Activated B cell treated with CpG ODN at 0.5 μM for 24 hours (primary cell): ENCODE measurements at regions of chr6 and their contacts with region 1.

Region 1: DNA sequence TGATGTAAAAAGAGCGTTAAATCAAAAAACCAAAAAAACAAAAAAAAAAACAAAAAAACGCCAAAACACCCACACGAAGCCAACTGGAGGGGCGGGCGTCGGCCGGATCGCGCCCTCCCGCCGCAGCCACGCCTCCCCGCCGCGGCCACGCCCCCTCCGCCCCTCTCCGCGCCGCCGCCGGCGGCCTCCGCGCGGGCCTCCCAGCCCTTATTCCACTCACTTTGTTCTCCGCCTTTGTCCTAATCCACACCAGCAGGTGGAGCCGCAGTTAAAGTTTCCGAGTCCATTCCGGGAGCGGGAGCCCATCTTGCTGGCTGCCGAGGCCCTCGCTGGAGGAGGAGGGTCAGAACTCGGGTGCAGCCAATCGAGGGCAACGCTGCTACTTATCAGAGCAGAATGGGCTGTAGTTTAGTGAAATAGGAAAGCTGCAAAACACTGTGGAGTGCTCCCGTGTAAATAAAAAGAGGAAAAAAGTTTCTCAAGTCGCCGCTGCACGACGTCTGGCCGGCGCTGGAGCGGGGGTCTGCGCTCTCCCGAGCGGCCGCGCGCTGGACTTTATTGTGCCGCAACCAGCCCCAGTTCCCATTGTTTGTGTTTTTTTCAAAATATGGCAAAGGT is at the start of gene ASF1A:
- DNase-seq: peak; percentile 86
- ATAC-seq: peak; percentile 59
- H3K4me3 Mint-ChIP-seq: peak within 1 kb of the TSS; percentile 99
- H3K27ac Mint-ChIP-seq: peak within 1 kb of the TSS; percentile 90
- H3K4me1 Mint-ChIP-seq: peaks cover 65% of the 10 kb centered on the region
- H3K27me3 Mint-ChIP-seq: no peaks in the 10 kb centered on the region
- CTCF ChIP-seq: no peak
- total RNA-seq, gene ASF1A: 12.1 and 13.1 TPM in 2 replicates

Region 2: GRCh38 chr6:117674991-117675657 is 1218.8 kb before region 1 on chr6 and contains the start of gene NUS1:
- CTCF ChIA-PET with region 1: no interaction called
- POLR2A ChIA-PET with region 1: no interaction called
- intact Hi-C with region 1: loop called (anchors 10 kb)
- DNase-seq: peak; percentile 97
- ATAC-seq: peak; percentile 98
- H3K4me3 Mint-ChIP-seq: peak within 1 kb of the TSS; percentile 95
- H3K27ac Mint-ChIP-seq: peak within 1 kb of the TSS; percentile 89
- H3K4me1 Mint-ChIP-seq: peaks cover 42% of the 10 kb centered on the region
- H3K27me3 Mint-ChIP-seq: no peaks in the 10 kb centered on the region
- CTCF ChIP-seq: no peak
- total RNA-seq, gene NUS1: 29.1 and 30.6 TPM in 2 replicates

Region 3: DNA sequence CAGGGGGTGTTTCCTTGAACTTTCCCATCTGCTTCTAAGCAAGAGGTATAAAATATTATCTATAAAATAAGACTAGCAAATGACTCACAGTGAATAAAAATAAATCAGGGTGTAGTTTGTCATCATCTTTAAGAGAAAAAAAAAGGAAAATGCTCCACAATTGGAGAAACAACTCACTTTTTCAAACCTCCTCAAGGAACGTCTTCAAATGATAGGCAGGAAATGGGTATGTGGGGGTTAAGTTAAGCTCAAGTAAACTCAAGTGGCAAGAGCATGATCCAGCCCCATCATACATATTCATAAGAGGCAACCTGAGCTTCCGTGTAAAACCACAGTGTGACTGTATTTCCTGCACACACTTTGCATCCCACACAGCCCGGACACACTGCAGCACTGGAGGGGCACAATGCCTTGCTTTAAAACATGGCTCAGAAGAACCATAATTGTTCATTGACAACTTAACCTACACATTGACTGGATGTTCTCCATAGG is 184.0 kb before region 1 on chr6:
- CTCF ChIA-PET with region 1: no interaction called
- POLR2A ChIA-PET with region 1: interaction called, 13 read pairs
- intact Hi-C with region 1: loop called (anchors 2 kb)
- DNase-seq: no peak
- ATAC-seq: peak; percentile 92
- H3K4me3 Mint-ChIP-seq: peak overlapping the region; percentile 95
- H3K27ac Mint-ChIP-seq: peak overlapping the region; percentile 98
- H3K4me1 Mint-ChIP-seq: peaks cover 62% of the 10 kb centered on the region
- H3K27me3 Mint-ChIP-seq: no peaks in the 10 kb centered on the region
- CTCF ChIP-seq: no peak

Region 4: GRCh38 chr6:118810420-118811027 is 83.4 kb before region 1 on chr6:
- CTCF ChIA-PET with region 1: interaction called, 4 read pairs
- POLR2A ChIA-PET with region 1: interaction called, 6 read pairs
- intact Hi-C with region 1: loop called (anchors 1 kb)
- DNase-seq: no peak
- ATAC-seq: peak; percentile 82
- H3K4me3 Mint-ChIP-seq: peak overlapping the region; percentile 69
- H3K27ac Mint-ChIP-seq: peak overlapping the region; percentile 83
- H3K4me1 Mint-ChIP-seq: peaks cover 36% of the 10 kb centered on the region
- H3K27me3 Mint-ChIP-seq: no peaks in the 10 kb centered on the region
- CTCF ChIP-seq: no peak

Region 5: GRCh38 chr6:118881440-118882313 is 12.2 kb before region 1 on chr6:
- CTCF ChIA-PET with region 1: interaction called, 4 read pairs
- POLR2A ChIA-PET with region 1: interaction called, 36 read pairs
- intact Hi-C with region 1: loop called (anchors 1 kb)
- DNase-seq: no peak
- ATAC-seq: peak; percentile 58
- H3K4me3 Mint-ChIP-seq: peak overlapping the region; percentile 63
- H3K27ac Mint-ChIP-seq: peak overlapping the region; percentile 72
- H3K4me1 Mint-ChIP-seq: peaks cover 66% of the 10 kb centered on the region
- H3K27me3 Mint-ChIP-seq: no peaks in the 10 kb centered on the region
- CTCF ChIP-seq: no peak

Region 6: DNA sequence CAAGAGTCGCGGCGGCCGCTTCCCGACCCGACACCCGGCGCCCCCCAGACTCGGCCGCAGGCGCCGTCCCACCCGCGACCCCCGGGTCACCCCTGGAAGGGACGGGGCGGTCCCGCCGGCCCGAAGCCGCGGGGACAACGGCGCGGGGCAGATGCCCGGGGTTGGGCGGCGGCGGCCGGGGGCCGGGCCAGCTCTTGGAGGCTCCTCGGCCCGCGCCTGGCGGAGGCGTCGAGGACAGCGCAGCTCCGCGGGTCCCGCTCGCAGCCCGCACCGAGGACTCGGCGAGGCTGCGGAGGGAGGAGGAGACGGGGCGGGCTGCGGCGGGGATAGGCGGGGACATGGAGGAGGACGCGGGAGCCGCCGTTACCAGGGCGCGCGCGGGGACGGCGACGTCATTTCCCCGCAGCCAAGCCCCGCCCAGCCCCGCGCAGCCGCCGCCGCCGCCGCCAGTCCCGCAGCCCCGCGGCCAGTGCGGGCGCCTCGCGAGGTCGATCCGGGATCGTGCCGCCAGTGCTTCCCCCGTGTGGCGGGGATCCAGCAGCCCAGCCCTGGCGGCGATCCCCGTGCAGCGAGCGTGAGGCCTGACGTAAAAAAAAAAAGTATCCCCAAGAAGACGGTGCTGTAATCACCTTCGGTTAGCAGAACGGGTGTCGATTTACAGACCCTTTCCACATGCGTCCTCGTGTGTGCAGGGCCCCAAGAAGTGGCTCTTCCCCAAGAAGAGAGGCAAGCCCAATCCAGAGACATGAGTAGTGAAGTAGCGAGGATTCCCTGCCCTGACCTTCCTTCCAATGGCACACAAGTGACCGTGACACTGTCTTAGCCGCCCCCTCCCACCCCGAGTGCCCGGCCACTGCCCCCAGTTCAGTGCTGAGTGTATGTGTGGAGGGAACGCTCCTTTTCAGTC is 184.7 kb after region 1 on chr6 and contains the start of gene FAM184A:
- CTCF ChIA-PET with region 1: no interaction called
- POLR2A ChIA-PET with region 1: no interaction called
- intact Hi-C with region 1: loop called (anchors 2 kb)
- DNase-seq: peak; percentile 61
- ATAC-seq: peak; percentile 83
- H3K4me3 Mint-ChIP-seq: peak within 1 kb of the TSS; percentile 93
- H3K27ac Mint-ChIP-seq: no peak within 1 kb of the TSS
- H3K4me1 Mint-ChIP-seq: peaks cover 17% of the 10 kb centered on the region
- H3K27me3 Mint-ChIP-seq: peaks cover 16% of the 10 kb centered on the region
- CTCF ChIP-seq: no peak
- total RNA-seq, gene FAM184A: 0.24 and 1.1 TPM in 2 replicates